ENCODE measurements at regions of chr1 and their contacts with region 1.

Region 1: DNA sequence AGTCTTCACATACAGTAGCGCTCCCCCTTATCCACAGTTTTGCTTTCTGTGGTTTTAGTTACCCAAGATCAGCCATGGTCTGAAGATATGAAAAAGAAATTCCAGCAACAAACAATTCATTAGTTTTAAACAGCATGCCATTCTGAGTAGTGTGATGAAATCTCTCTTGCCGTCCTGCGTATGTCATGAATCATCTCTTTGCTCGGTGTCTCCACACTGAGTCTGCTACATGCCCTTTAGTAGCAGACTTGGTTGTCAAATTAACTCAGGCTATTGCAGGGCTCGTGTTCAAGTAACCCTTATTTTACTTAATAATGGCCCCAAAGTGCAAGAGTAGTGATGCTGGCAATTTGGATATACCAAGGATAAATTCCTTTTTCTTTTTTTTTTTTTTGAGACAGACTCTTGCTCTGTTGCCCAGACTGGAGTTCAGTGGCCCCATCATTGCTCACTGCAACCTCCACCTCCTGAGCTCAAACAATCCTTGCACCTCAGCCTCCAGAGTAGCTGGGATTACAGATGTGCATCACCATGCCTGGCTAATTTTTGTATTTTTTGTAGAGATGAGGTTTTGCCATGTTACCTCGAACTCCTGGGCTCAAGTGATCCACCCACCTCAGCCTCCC is 22.6 kb downstream of the PHACTR4 start:
- DNase-seq: no peak
- H3K4me3 ChIP-seq: no peak overlapping the region
- H3K27ac ChIP-seq: no peak overlapping the region
- H3K4me1 ChIP-seq: no peaks in the 10 kb centered on the region
- H3K27me3 ChIP-seq: no peaks in the 10 kb centered on the region
- CTCF ChIP-seq: no peak

Region 2: DNA sequence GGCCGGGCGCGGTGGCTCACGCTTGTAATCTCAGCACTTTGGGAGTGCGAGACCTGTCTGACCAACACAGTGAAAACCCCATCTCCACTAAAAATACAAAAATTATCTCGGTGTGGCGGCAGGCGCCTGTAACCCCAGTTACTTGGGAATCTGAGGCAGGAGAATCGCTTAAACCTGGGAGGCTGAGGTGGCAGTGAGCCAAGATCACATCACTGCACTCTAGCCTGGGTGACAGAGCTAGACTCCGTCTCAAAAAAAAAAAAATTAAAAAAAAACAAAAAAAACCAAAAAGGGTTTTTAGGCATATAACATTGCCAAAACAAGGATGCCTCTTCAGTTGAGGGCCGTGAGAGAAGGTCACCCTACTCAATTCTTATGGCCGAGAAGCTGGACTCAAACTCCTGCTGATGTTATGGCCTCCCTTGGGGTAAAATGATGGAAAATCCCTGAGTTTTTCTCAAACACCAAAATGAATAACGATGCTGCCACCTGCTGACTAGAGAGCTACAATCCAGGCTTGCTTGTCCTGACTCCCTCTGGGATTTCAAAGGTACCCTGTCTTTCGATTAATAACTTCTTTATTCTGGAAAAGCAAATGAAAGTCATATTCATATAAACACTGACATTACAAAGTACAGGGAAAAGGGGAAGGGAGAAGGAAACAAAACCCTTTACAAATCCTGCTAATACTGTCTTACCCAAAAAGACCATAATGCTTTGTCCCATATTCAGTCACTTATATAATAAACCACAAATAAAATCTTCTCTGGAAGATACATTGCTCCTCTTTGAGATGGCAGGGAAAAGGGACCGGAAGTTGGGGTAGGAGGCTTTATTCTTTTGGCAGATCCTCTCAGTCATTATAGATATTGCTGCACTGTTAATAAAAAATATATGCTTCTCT is 210.6 kb after region 1 on chr1:
- intact Hi-C with region 1: loop called (anchors 10 kb)
- DNase-seq: peak; percentile 63 to 72
- H3K4me3 ChIP-seq: no peak overlapping the region
- H3K27ac ChIP-seq: peak overlapping the region; percentile 38 to 44
- H3K4me1 ChIP-seq: peaks cover 0 to 13% (median 5%) of the 10 kb centered on the region in 4 donors
- H3K27me3 ChIP-seq: no peaks in the 10 kb centered on the region
- CTCF ChIP-seq: peak; percentile 61 to 77